Activated CD8-positive, alpha-beta memory T cell treated with anti-CD3 and anti-CD28 coated beads, Interleukin-2, amount 10 ng/mL, durations not matched to agents 7 days and 5 days (primary cell): ENCODE measurements at regions of chr12 and their contacts with region 1.

Region 1: DNA sequence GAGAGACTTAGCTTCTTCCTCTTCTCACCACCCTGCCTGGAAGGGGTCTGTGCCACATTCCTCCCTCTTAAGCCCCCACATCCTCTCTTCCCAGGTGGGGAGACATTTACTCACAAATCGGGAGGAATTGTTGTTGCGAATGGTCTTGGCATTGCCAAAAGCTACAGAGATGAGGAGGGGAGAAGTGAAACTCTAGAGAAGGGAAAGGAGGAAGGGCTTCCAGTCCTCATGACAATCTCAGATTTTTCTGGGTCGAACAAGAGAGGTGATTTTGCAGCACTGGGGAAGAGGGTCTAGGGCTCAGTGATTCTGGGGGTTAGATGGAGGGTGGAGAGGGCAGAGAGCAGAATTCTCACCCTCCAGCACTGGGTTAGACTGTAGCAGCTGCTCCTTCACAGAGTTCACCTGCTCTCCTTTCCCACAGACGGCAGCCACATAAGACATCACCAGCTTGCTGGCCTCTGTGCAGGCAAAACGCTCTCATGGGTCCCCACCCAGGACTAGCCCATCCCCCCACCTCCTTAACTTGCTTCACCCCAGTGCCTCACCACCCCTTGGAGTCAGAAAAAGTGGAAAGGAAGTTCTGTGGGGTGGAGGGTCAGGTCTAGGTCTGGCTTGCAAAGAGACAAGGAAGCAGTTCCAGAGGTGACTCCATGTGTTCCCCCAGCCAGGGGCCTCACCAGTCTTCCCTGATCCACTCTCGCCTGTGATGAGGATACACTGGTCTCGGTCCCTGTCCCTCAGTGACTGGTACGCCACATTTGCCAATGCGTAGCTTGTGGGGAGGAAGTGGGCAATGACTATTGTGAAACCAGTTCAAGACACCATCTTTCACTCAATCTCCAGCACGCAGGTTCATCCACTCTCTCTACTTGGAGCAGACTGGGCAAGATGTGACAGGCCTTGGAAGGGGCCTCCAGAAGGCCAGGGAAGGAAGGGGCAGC is 2.7 kb downstream of the MYO1A start:
- DNase-seq: peak; percentile 89
- ATAC-seq: peak; percentile 85
- H3K4me3 Mint-ChIP-seq: peak overlapping the region; percentile 24
- H3K27ac Mint-ChIP-seq: peak overlapping the region; percentile 74
- H3K4me1 Mint-ChIP-seq: peaks cover 37% of the 10 kb centered on the region
- H3K27me3 Mint-ChIP-seq: peaks cover 22% of the 10 kb centered on the region

Region 2: DNA sequence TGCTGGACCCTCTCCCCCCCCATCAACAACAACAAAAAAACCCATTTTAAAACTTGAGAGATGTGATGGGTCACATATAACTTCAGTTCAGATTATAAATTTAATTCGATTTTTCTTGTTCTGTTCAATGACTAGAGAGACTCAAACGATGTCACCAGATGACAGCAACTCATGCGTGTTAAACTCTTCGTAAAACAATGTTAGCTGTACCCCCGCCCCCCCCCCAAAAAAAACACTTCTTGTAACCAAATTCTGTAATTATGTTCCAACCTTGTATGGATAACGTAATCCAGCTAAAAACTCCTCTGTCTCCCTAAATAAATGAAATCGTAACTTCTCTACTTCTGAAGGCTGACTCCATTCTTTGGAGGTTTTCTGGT is 321.5 kb before region 1 on chr12:
- CTCF ChIA-PET with region 1: no interaction called
- DNase-seq: no peak
- ATAC-seq: no peak
- H3K4me3 Mint-ChIP-seq: peak overlapping the region; percentile 98
- H3K27ac Mint-ChIP-seq: peak overlapping the region; percentile 96
- H3K4me1 Mint-ChIP-seq: peaks cover 44% of the 10 kb centered on the region
- H3K27me3 Mint-ChIP-seq: no peaks in the 10 kb centered on the region

Region 3: DNA sequence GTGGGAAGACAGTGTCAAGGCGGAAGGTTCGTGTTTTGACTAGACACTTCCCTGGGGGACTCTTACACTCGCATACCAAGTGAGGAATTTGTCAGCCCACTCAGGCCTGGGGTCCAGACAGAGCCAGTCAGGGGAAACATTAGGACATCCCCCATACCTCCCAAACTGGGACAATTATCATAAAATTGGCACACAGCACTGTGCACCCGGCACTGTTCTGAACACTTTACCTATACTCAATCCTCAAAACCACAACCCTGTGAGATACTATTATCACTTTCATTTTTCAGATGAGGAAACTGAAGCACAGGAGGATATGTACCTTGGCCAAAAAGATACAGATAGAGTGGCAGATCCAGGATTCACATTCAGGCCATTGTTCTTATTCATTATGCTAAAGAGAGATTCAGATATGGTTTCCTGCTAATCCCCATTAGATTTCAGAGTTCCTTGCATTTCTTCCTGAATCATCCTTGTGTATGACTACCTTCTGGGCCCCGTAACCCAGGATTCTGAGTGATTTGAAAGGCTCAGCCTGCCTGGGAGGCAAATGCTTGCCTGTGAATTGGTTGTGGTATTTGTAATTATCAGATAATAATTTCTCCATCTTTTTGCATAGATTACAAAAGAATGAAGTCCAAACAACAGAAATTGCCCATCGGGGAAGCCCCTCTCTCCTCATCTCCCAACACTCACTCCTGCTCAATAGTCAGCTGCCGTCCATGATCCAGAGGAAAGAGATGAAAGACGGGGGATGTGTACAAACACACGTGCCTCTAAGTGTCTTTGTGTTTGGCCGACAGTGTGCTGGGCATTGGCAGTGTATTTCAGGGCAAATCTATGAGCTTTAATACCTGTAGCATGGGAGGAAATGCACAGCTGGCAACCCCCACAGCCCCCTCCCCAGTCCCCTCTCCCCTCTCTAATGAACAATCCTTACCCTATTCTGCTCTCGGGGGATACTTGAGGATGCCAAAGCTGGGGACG is 35.5 kb before region 1 on chr12:
- CTCF ChIA-PET with region 1: interaction called, 10 read pairs
- DNase-seq: peak; percentile 53
- ATAC-seq: peak; percentile 73
- H3K4me3 Mint-ChIP-seq: peak overlapping the region; percentile 9
- H3K27ac Mint-ChIP-seq: no peak overlapping the region
- H3K4me1 Mint-ChIP-seq: peaks cover 23% of the 10 kb centered on the region
- H3K27me3 Mint-ChIP-seq: peaks cover 26% of the 10 kb centered on the region

Region 4: DNA sequence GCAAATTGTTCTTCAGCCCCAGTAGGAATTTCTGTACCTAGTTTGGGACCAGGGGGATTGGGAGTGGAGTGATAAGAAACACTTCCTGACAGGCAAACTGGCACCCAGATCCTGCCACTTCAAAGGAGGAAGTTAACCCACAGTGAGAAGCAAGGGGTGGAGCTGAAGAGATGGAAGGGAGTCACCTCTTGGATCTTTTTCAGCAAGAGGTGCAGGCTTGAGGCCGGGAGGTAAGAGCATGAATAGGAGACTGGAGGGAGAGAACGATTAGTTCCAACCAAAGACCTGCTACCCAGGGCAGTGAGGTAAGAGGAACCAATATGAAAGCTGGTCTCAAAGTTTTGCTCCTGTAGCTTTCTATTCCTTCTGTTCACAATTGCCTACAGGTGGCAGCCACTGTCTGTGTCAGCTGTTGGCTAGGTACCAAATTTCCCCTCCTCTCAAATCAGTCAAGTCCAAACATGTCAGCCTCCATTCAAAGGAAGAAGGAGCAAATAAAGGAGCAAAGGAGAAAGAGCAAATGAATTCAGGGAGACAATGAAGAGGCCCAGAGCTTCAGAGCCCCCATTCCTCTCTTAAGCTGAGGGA is 16.0 kb before region 1 on chr12:
- CTCF ChIA-PET with region 1: interaction called, 43 read pairs
- DNase-seq: no peak
- ATAC-seq: peak; percentile 53
- H3K4me3 Mint-ChIP-seq: no peak overlapping the region
- H3K27ac Mint-ChIP-seq: peak overlapping the region; percentile 51
- H3K4me1 Mint-ChIP-seq: peaks cover 25% of the 10 kb centered on the region
- H3K27me3 Mint-ChIP-seq: no peaks in the 10 kb centered on the region

Region 5: GRCh38 chr12:57058454-57058853 is 11.2 kb after region 1 on chr12:
- CTCF ChIA-PET with region 1: interaction called, 51 read pairs
- DNase-seq: no peak
- ATAC-seq: no peak
- H3K4me3 Mint-ChIP-seq: no peak overlapping the region
- H3K27ac Mint-ChIP-seq: no peak overlapping the region
- H3K4me1 Mint-ChIP-seq: peaks cover 10% of the 10 kb centered on the region
- H3K27me3 Mint-ChIP-seq: no peaks in the 10 kb centered on the region

Region 6: DNA sequence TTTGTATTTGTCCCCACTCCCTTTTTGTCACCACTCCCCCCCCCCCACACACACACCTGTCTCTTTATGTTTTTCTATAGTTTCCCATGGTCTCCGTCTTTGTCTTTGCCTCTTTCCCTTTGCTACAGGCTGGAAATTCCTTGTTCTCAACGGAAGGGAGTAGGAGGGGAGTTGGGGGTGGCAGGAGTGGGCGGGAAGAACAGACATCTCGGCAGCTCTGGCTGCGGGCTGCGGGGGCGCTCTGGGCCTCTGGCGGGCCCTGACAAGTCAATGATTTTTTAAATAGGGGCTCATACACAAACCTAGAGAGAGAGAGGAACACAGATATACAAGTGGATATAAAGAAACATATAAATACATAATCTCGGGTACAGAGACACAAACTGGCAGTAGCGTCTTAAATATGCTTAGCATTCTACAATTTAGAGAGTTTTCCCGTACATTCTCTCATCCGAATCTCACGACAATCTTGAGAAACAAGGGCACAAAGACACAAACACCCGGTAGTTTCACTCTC is 39.3 kb after region 1 on chr12:
- CTCF ChIA-PET with region 1: no interaction called
- DNase-seq: peak; percentile 63
- ATAC-seq: no peak
- H3K4me3 Mint-ChIP-seq: peak overlapping the region; percentile 81
- H3K27ac Mint-ChIP-seq: peak overlapping the region; percentile 91
- H3K4me1 Mint-ChIP-seq: peaks cover 42% of the 10 kb centered on the region
- H3K27me3 Mint-ChIP-seq: no peaks in the 10 kb centered on the region